ENCODE measurements at regions of chr7 and their contacts with region 1.

Region 1: DNA sequence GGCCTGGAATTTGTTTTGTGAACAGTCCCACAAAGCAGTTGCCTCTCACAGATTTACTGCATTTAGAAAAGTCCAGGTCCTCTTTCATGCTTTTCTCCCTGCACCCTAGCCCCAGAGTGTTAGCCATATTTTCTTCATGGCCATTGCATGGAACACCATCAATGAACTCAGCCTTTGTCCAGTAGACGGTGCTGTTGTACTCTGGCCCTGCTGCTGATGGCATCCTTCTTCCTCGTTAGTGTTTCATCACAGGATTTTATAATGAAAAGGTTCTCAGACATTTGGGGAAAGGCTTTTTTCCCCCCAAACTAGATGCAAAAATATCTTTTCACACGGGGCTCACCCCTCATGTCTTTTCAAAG is 93.0 kb upstream of the SLC25A13 start:
- DNase-seq: peak; percentile 72
- ATAC-seq: peak; percentile 95
- H3K4me3 ChIP-seq: no peak overlapping the region
- H3K27ac ChIP-seq: no peak overlapping the region
- H3K4me1 ChIP-seq: peaks cover 7% of the 10 kb centered on the region; the same call in 1 of the 2 replicates
- H3K27me3 ChIP-seq: no peaks in the 10 kb centered on the region
- CTCF ChIP-seq: peak; percentile 90

Region 2: DNA sequence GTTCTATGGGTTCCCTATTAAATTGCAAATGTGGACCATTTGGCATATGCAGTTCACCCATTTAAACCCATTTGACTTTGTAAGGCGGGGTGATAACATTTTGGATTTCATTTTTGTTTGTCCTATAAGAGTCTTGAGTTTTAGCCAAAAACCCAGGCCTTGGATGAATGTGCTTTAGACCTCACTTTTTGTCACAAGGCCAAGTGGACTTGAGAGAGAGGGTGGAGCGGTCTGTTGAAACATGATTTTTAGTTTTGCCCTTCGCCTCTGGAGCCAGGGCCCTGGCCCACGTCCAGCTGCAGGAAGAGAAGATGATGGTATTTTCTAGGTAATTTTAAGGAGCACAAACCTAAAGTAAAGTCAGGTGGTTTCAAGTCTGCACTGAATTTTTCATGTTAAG is 353.1 kb before region 1 on chr7:
- CTCF ChIA-PET with region 1: no interaction called
- POLR2A ChIA-PET with region 1: no interaction called
- intact Hi-C with region 1: no loop called
- DNase-seq: no peak
- ATAC-seq: no peak
- H3K4me3 ChIP-seq: no peak overlapping the region
- H3K27ac ChIP-seq: no peak overlapping the region
- H3K4me1 ChIP-seq: peaks cover 3% of the 10 kb centered on the region; the same call in 1 of the 2 replicates
- H3K27me3 ChIP-seq: no peaks in the 10 kb centered on the region
- CTCF ChIP-seq: no peak

Region 3: GRCh38 chr7:96179837-96180236 is 235.1 kb before region 1 on chr7:
- CTCF ChIA-PET with region 1: no interaction called
- POLR2A ChIA-PET with region 1: no interaction called
- intact Hi-C with region 1: loop called (anchors 5 kb)
- DNase-seq: peak; percentile 8
- ATAC-seq: peak; percentile 59
- H3K4me3 ChIP-seq: no peak overlapping the region
- H3K27ac ChIP-seq: no peak overlapping the region
- H3K4me1 ChIP-seq: peaks cover 11% of the 10 kb centered on the region; the same call in 1 of the 2 replicates
- H3K27me3 ChIP-seq: no peaks in the 10 kb centered on the region
- CTCF ChIP-seq: peak; percentile 42; the same call in 1 of the 2 replicates

Region 4: GRCh38 chr7:96349572-96349971 is 65.3 kb before region 1 on chr7:
- CTCF ChIA-PET with region 1: no interaction called
- POLR2A ChIA-PET with region 1: no interaction called
- intact Hi-C with region 1: no loop called
- DNase-seq: no peak
- ATAC-seq: no peak; the same call in 1 of the 2 replicates
- H3K4me3 ChIP-seq: no peak overlapping the region
- H3K27ac ChIP-seq: no peak overlapping the region
- H3K4me1 ChIP-seq: no peaks in the 10 kb centered on the region
- H3K27me3 ChIP-seq: no peaks in the 10 kb centered on the region
- CTCF ChIP-seq: no peak

Region 5: DNA sequence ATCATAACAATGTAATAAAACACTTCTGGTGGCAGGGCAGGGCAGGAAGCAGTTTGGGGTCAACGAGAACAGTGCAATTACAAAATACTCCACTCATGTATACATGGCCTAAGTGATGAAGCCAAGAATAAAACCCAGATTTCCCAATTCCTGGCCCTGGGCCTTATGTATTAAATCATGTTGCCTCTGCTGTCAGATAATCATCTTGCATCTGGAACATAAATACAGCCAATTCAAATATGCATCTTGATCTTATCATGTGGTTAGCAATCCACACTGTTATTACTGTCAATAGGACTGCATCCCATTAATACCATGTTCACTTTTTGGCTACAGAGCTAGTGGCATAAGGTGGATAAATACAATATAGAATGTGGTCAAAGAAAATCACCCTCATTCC is 93.5 kb after region 1 on chr7:
- CTCF ChIA-PET with region 1: no interaction called
- POLR2A ChIA-PET with region 1: no interaction called
- intact Hi-C with region 1: no loop called
- DNase-seq: peak; percentile 76
- ATAC-seq: peak; percentile 27; the same call in 1 of the 2 replicates
- H3K4me3 ChIP-seq: no peak overlapping the region
- H3K27ac ChIP-seq: no peak overlapping the region
- H3K4me1 ChIP-seq: no peaks in the 10 kb centered on the region
- H3K27me3 ChIP-seq: no peaks in the 10 kb centered on the region
- CTCF ChIP-seq: no peak

Region 6: DNA sequence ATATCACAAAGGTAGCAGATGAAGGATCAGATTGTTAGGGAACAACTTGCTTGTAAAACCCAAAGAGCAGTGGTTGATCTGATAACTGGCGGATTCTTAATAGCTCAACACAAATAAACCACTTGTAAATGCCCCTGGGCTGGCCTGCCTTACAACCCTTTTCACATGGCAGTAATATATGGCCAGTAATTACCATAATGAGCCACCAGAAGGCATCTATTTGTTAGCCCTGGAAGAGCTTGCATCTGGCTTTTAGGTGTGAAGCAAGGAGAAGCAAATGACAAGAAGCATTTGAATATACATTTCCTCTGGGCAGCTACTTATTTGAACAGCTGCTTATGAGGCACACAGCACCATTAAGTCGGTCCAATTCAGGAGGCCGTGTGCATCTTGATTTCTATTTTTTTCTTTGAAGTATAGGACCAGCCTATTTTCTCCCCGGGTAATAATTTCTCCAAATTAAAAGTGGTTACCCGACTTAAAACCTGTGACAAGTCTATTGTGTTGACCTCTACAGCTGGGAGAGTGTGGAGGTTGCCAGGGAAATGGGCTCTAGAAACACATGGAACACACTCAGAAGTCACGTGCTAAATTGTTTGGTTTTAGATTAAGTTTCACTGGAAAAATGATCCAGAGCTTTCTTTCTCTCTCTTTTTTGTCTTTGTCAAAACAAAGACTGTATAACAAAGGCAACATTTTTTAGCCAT is 181.4 kb after region 1 on chr7:
- CTCF ChIA-PET with region 1: no interaction called
- POLR2A ChIA-PET with region 1: no interaction called
- intact Hi-C with region 1: loop called (anchors 5 kb)
- DNase-seq: peak; percentile 32
- ATAC-seq: peak; percentile 66
- H3K4me3 ChIP-seq: no peak overlapping the region
- H3K27ac ChIP-seq: no peak overlapping the region
- H3K4me1 ChIP-seq: no peaks in the 10 kb centered on the region
- H3K27me3 ChIP-seq: no peaks in the 10 kb centered on the region
- CTCF ChIP-seq: peak; percentile 47

Region 7: GRCh38 chr7:96709381-96710228 is 294.7 kb after region 1 on chr7 and contains the start of gene SEM1:
- CTCF ChIA-PET with region 1: no interaction called
- POLR2A ChIA-PET with region 1: no interaction called
- intact Hi-C with region 1: loop called (anchors 10 kb)
- DNase-seq: peak; percentile 81
- ATAC-seq: peak; percentile 96
- H3K4me3 ChIP-seq: peak within 1 kb of the TSS; percentile 92
- H3K27ac ChIP-seq: peak within 1 kb of the TSS; percentile 74
- H3K4me1 ChIP-seq: peaks cover 17% of the 10 kb centered on the region
- H3K27me3 ChIP-seq: no peaks in the 10 kb centered on the region
- CTCF ChIP-seq: no peak
- total RNA-seq, gene SEM1: 263 and 292 TPM in 2 replicates

Region 8: DNA sequence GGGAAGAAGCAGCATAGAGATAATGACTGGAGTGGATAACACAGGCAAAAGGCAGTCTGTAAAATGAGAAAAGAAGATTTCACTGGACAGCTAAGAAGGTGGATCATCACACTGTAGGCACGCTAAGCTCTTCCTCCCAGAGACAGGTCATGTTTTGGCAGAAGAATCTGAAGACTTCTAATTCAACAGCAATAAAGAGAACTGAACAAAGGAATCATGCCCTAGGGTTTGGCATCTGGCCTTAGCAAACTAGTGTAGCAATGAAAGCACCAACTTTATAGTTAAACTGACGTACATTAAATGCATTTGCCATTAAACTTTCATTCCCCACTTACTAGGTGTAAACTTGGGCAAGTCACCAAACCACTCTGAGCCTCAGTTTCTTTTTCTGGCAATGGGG is 379.2 kb after region 1 on chr7:
- CTCF ChIA-PET with region 1: no interaction called
- POLR2A ChIA-PET with region 1: no interaction called
- intact Hi-C with region 1: loop called (anchors 10 kb)
- DNase-seq: peak; percentile 76
- ATAC-seq: peak; percentile 70
- H3K4me3 ChIP-seq: no peak overlapping the region
- H3K27ac ChIP-seq: peak overlapping the region; percentile 68
- H3K4me1 ChIP-seq: peaks cover 4% of the 10 kb centered on the region; the same call in 1 of the 2 replicates
- H3K27me3 ChIP-seq: no peaks in the 10 kb centered on the region
- CTCF ChIP-seq: no peak